PC-9 (cell line): ENCODE measurements at regions of chr9 and their contacts with region 1.

Region 1: DNA sequence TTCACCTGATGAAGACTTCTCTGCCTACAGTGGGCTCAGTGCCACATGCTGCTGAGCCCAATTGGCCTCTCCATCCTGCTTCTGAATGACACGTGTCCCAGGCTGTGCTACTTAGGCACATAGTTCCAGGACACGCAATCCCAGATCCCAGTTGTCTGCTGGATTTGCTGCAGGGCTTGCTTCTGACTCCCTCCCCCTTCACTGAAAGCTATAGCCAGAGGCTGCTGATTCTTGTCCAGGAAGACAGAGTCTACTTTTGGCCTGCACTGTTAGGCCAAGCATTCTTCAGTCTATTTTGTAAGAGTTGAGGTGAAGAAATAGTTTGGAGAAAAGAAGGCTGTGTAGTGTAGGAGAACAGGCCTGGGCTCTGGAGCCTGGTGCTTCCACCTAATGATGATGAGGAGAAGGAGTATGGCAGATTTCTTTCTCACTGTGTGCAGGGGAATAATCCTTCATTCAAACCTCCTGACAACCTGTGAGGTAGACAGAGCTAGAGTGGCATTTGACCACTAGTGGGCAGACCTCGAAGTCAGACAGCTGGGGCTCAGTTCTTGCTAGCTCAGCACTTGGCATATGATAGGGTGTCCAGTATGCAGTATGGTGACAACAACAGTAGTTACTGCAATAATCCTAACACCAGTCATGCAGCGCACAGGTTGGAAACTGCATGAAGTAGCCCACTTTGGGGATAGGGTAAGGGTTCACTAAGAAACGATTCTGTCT is 19.5 kb upstream of the ASPN start:
- DNase-seq: peak in 1 of 2 experiments; percentile 43
- H3K4me3 ChIP-seq: no peak overlapping the region
- H3K27ac ChIP-seq: 0 out of 2 replicates have a peak overlapping the region, but pooled peaks have one; percentile 10
- H3K4me1 ChIP-seq: peaks cover 28% of the 10 kb centered on the region
- H3K27me3 ChIP-seq: no peaks in the 10 kb centered on the region
- CTCF ChIP-seq: peak; percentile 57

Region 2: GRCh38 chr9:91803151-91803940 is 698.5 kb before region 1 on chr9:
- CTCF ChIA-PET with region 1: no interaction called
- POLR2A ChIA-PET with region 1: no interaction called
- intact Hi-C with region 1: no loop called
- DNase-seq: no peak
- H3K4me3 ChIP-seq: no peak overlapping the region
- H3K27ac ChIP-seq: no peak overlapping the region
- H3K4me1 ChIP-seq: peaks cover 10% of the 10 kb centered on the region; the same call in 1 of the 2 replicates
- H3K27me3 ChIP-seq: peaks cover 70% of the 10 kb centered on the region
- CTCF ChIP-seq: no peak

Region 3: DNA sequence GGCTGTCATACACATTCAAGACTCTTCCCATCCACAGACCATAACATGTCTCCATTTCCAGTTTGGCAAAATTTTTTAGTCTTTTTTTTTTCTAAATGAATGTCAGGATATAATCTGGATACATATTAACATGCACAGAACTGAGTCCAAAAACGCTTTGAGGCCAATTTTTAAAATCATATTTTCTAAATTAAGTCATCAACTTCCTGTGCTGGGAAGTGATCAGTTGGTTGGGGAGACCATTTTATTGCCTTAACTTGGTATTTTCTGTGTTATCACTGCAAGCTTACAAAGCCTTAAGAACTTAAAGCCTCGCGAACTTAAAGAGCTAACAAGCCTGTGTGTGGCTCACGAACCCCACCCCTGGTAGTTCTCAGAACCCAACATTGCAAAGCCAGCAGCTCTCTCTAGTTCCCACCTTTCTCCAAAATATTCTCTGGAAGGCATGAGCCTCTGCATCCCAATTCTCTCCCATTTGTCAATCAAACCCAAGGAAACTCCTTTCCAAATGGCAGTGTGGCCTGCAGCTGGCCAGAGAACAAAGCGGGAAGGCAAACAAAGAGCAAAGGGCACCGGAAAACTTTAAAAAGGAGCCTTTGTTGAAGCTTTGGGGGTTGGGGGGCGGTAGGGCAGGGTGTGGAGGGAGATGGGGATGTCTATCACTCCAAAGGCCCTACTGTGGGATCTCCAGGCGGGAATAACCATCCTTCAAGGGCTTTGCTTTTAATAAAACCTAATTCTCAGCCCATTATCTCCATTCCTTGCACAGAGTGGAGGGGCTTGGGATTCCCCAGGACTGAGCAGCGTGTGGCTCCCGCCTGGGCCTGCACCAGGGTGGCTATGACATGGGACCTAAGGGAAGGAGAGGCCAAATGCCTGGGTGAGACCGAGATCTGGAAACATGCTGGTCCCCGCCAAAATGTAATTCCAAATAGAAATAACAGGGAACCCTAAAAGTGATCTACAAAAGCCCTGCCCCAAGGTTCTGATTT is 616.8 kb before region 1 on chr9:
- CTCF ChIA-PET with region 1: interaction called, 11 read pairs
- POLR2A ChIA-PET with region 1: no interaction called
- intact Hi-C with region 1: no loop called
- DNase-seq: no peak
- H3K4me3 ChIP-seq: no peak overlapping the region
- H3K27ac ChIP-seq: no peak overlapping the region
- H3K4me1 ChIP-seq: no peaks in the 10 kb centered on the region
- H3K27me3 ChIP-seq: peaks cover 95% of the 10 kb centered on the region
- CTCF ChIP-seq: no peak

Region 4: DNA sequence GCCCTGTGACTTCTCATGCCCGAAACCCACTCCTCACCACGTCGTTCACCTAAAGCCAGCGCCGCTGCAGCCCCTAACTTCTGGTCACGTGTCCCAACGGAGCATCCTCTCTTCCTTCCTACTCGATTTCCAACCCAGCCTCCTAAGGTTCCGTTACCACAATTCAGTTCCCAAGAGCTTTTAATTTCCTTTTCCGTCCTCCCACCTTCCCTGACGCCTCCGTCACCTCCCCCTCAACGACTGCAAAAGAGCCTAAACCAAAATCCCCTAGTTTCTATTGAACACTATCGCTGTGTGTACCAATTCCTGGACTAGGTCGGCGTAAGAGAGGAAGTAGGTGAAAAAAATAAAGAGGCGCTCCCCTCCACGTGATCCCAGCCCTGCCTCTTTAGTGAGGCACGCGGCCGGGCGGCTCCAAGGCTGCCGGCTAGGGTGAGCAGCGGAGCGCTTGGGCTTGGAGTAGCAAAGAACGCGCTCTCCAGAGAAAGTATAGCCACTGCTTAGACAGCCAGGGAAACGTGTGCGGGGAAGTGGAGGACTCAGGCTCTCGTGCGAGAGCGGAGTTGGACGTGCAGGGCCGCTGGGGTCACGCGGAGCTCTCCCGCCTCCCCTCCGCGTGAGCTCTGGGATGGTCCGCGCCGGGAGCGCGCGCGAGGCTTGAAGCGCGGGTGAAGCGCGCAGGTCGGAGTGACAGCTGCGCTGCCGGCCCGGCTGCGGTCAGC is 176.4 kb before region 1 on chr9 and contains the starts of genes CENPP and NOL8:
- CTCF ChIA-PET with region 1: no interaction called
- POLR2A ChIA-PET with region 1: interaction called, 5 read pairs
- intact Hi-C with region 1: loop called (anchors 2 kb)
- DNase-seq: peak; percentile 76 to 86
- H3K4me3 ChIP-seq: peak within 1 kb of the TSS; percentile 87
- H3K27ac ChIP-seq: peak within 1 kb of the TSS; percentile 90
- H3K4me1 ChIP-seq: peaks cover 22% of the 10 kb centered on the region
- H3K27me3 ChIP-seq: no peaks in the 10 kb centered on the region
- CTCF ChIP-seq: no peak
- total RNA-seq, gene CENPP: 7.6 and 10.0 TPM in 2 replicates
- total RNA-seq, gene NOL8: 35.7 and 46.9 TPM in 2 replicates

Region 5: GRCh38 chr9:92359394-92359995 is 142.3 kb before region 1 on chr9:
- CTCF ChIA-PET with region 1: no interaction called
- POLR2A ChIA-PET with region 1: interaction called, 20 read pairs
- intact Hi-C with region 1: no loop called
- DNase-seq: no peak
- H3K4me3 ChIP-seq: no peak overlapping the region
- H3K27ac ChIP-seq: no peak overlapping the region
- H3K4me1 ChIP-seq: no peaks in the 10 kb centered on the region
- H3K27me3 ChIP-seq: no peaks in the 10 kb centered on the region
- CTCF ChIP-seq: no peak

Region 6: DNA sequence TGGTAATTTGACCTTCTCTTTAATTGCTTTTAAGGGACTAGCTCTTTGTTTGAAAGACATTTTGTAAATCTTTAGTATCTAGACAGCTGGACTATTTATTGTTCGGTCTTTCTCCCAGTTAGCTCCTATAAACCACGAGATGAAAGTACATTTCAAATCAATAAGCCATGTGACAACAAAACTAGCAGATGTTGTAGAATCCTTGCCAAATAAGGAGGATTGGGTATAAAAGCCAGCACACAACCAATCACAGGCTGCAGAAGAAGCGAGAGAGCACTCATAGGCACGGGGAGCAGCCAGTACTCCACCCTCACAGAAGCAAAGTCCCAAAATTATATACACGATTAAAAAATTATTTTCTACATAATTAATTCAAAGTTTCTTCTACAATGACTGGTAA is 69.5 kb before region 1 on chr9:
- CTCF ChIA-PET with region 1: no interaction called
- POLR2A ChIA-PET with region 1: interaction called, 10 read pairs
- intact Hi-C with region 1: no loop called
- DNase-seq: no peak
- H3K4me3 ChIP-seq: no peak overlapping the region
- H3K27ac ChIP-seq: no peak overlapping the region
- H3K4me1 ChIP-seq: no peaks in the 10 kb centered on the region
- H3K27me3 ChIP-seq: no peaks in the 10 kb centered on the region
- CTCF ChIP-seq: no peak

Region 7: GRCh38 chr9:92481040-92481633 is 20.7 kb before region 1 on chr9:
- CTCF ChIA-PET with region 1: no interaction called
- POLR2A ChIA-PET with region 1: interaction called, 3 read pairs
- intact Hi-C with region 1: loop called (anchors 2 kb)
- DNase-seq: peak in 1 of 2 experiments; percentile 71
- H3K4me3 ChIP-seq: no peak overlapping the region
- H3K27ac ChIP-seq: peak overlapping the region; percentile 56
- H3K4me1 ChIP-seq: peaks cover 28% of the 10 kb centered on the region
- H3K27me3 ChIP-seq: no peaks in the 10 kb centered on the region
- CTCF ChIP-seq: no peak